Aorta (tissue), 5 donors: ENCODE measurements at regions of chr19 and their contacts with region 1.

Region 1: GRCh38 chr19:37466798-37467607 is at the start of gene ZNF569:
- DNase-seq: peak; percentile 94
- ATAC-seq: peak; percentile 93
- H3K4me3 ChIP-seq: peak within 1 kb of the TSS; percentile 61 to 80
- H3K27ac ChIP-seq: peak within 1 kb of the TSS in 1 of 2 donors; percentile 68
- H3K4me1 ChIP-seq: no peaks in the 10 kb centered on the region
- H3K27me3 ChIP-seq: no peaks in the 10 kb centered on the region
- total RNA-seq, gene ZNF569: 5.4 to 6.7 TPM

Region 2: GRCh38 chr19:37334179-37335071 is 132.6 kb before region 1 on chr19:
- intact Hi-C with region 1: loop called in 1 of 2 experiments (anchors 10 kb)
- DNase-seq: peak; percentile 95 to 98
- ATAC-seq: peak; percentile 98
- H3K4me3 ChIP-seq: peak overlapping the region; percentile 45 to 72
- H3K27ac ChIP-seq: peak overlapping the region in 1 of 2 donors; percentile 85
- H3K4me1 ChIP-seq: peaks cover 0 to 4% of the 10 kb centered on the region in 2 donors
- H3K27me3 ChIP-seq: no peaks in the 10 kb centered on the region

Region 3: DNA sequence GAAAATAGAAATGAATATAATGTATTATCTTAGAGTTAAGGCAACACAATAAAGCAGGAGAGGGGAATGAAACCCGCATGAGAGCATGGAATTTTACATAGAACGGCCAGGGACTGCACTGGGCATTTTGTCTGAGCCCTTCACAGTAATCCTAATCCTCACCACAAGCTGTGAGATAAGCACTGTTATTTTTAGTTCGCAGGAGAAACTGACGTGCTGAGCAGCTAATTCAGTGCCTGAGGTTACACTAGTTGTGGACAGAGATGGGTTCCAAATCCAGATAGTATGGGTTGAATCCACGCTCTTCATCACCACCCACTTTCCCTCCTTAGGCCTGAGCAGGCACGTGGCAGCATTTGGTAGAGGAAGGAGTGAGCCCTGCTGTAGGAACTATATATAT is 120.9 kb before region 1 on chr19:
- intact Hi-C with region 1: no loop called
- DNase-seq: no peak
- ATAC-seq: no peak
- H3K4me3 ChIP-seq: no peak overlapping the region
- H3K27ac ChIP-seq: no peak overlapping the region
- H3K4me1 ChIP-seq: no peaks in the 10 kb centered on the region
- H3K27me3 ChIP-seq: no peaks in the 10 kb centered on the region

Region 4: DNA sequence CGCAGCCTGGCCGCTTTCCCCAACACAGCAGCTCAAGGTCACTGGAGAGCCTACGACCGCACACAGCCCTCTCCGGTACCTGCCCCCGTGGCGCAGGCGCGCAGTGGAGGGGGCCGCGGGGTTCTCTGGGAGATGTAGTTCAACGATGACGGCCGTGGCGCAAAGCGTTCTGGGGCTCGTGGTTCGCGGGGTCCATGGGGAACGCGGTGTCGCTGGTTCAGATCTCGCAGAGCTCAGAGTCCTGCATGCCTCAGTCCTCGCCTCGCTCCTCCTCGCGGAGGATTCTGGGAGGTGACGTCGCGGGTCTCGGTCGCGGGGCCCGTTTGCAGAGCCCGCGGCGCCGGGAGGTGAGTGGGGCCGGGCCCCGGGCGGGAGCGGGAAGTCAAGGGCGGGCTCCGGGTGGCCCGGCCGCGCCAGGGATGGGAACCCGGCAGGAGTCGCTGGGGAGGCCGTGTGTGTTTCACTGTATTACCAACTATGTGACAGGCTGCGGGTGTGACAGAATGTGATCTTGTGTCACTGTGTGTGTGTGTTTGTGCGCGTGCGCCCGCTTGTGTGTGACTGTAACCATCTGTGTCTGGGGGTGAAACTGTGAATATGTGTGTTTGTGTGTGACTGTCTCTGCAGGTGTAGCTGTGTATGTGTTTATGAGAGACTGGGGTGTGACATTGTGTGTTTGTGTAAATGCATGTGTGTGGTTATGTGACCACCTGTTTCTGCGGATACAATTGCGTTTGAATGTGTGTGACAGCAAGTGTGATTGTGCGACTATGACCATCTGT is 95.9 kb before region 1 on chr19 and contains the start of gene ZNF527:
- intact Hi-C with region 1: loop called in 1 of 2 experiments (anchors 5 kb)
- DNase-seq: peak; percentile 99
- ATAC-seq: peak; percentile 99
- H3K4me3 ChIP-seq: peak within 1 kb of the TSS; percentile 52 to 65
- H3K27ac ChIP-seq: peak within 1 kb of the TSS in 1 of 2 donors; percentile 48
- H3K4me1 ChIP-seq: no peaks in the 10 kb centered on the region
- H3K27me3 ChIP-seq: no peaks in the 10 kb centered on the region
- total RNA-seq, gene ZNF527: 7.3 to 9.0 TPM

Region 5: DNA sequence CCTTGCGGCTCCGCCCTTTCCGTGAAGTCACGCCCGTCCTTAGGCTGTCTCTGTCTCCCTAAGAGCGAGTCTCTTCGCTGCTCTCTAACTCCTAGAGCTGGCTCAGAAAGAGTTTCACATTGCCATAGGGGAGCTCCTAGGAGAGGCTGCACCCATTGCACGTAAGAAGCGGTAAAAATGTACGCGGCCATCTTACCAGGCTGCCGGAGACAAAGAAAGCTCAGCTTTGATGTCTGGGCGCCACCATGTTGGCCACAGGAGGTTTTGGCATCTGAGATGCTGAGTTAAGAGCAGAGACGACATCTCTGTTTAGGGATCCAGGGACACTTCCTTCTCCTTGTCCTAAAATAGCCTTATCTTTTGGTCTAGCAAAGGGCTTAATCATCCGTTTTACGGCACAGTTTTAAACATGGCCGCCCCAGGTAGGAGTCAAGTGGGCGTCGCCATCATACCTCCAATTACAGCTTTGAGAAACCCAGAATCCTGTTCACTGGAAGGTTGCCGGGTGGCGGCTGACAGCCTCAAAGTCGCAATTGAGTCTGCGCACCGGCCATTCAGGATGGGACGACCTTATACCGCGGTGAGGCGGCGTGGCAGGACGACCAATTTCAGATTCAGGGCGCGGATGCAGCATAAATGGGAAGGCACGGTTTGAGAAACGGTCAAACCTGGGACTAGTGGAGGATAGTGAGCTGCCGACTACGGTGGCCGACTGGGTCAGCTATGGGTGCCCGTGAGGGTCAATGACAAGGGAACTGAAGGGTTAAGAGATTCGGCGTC is 39.6 kb after region 1 on chr19 and contains the start of gene ZNF793:
- intact Hi-C with region 1: loop called (anchors 2 to 5 kb)
- DNase-seq: peak; percentile 83 to 92
- ATAC-seq: peak; percentile 90
- H3K4me3 ChIP-seq: peak within 1 kb of the TSS; percentile 63 to 95
- H3K27ac ChIP-seq: peak within 1 kb of the TSS; percentile 48 to 98
- H3K4me1 ChIP-seq: no peaks in the 10 kb centered on the region
- H3K27me3 ChIP-seq: no peaks in the 10 kb centered on the region
- total RNA-seq, gene ZNF793: 7.5 to 8.3 TPM

Region 6: GRCh38 chr19:37537391-37537947 is 70.5 kb after region 1 on chr19:
- intact Hi-C with region 1: no loop called
- DNase-seq: no peak
- ATAC-seq: no peak
- H3K4me3 ChIP-seq: no peak overlapping the region
- H3K27ac ChIP-seq: no peak overlapping the region
- H3K4me1 ChIP-seq: no peaks in the 10 kb centered on the region
- H3K27me3 ChIP-seq: no peaks in the 10 kb centered on the region

Region 7: DNA sequence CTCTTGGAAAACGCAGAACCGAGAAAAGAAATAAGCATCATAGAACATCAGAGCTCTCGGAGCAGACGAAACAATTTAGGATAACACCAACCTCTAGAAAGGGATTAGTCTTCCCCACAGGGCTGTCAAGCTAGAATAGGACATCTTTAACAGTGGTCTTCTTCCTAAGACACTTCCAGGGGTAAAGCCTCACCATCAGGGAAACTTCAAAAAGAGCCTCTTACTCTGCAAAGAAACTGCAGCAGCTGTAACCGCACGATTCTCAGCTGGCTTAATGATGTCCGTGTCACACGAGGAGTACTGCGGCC is 126.9 kb after region 1 on chr19:
- intact Hi-C with region 1: no loop called
- DNase-seq: no peak
- ATAC-seq: no peak
- H3K4me3 ChIP-seq: peak overlapping the region; percentile 75 to 76
- H3K27ac ChIP-seq: peak overlapping the region in 1 of 2 donors; percentile 65
- H3K4me1 ChIP-seq: no peaks in the 10 kb centered on the region
- H3K27me3 ChIP-seq: no peaks in the 10 kb centered on the region

Region 8: DNA sequence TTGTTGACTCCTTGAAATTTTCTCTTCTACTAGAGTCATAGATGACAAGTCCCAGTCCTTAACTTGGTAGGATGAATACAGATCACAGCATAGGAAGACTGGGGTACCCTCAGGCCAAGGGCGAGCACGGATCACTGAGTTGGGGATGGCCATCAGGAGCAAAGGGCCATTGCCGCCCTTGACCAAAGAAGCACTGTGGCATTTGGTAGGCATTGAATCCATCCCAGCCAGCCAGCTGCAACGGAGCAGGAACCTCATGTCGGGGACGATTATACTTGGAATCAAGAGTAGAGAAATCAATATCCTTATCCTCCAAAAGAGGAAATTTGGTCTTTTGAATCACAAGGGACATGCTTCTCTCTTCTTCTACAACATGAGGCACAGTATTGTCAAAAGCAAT is 362.5 kb after region 1 on chr19:
- intact Hi-C with region 1: no loop called
- DNase-seq: no peak
- ATAC-seq: no peak
- H3K4me3 ChIP-seq: no peak overlapping the region
- H3K27ac ChIP-seq: no peak overlapping the region
- H3K4me1 ChIP-seq: no peaks in the 10 kb centered on the region
- H3K27me3 ChIP-seq: no peaks in the 10 kb centered on the region